ENCODE measurements at regions of chr5 and their contacts with region 1.

Region 1: DNA sequence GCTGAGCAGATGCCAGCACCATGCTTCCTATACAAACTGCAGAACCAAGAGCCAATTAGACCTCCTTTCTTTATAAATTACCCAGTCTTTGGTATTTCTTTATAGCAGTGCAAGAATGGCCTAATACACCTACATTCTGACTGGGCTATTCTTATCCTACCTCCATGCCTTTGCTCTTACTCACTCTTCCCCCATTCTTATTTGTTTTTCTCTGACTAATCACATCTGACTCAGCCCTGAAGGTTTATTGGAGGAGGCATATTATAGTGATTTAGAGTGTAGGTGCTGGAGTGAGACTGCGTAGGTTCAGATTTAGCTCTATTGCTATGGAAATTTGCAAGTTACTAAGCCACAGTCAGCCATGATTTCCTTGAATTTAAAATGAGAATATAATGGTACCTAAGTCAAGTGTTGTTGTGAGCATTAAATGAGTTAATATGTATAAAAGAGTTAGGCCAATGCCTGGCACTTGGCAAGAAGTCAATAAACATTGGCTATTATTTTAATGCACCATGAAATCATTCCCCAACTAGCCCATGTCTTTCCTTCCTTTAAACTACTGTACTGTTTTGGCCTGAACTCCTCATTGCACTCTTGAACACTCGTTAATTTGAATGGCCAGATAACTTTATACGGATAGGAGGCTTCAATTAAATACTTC is 531.2 kb upstream of the ZNF608 start:
- DNase-seq: no peak
- H3K4me3 ChIP-seq: no peak overlapping the region
- H3K27ac ChIP-seq: no peak overlapping the region
- H3K4me1 ChIP-seq: no peaks in the 10 kb centered on the region
- CTCF ChIP-seq: no peak

Region 2: GRCh38 chr5:125257057-125257972 is 20.3 kb before region 1 on chr5:
- CTCF ChIA-PET with region 1: no interaction called
- POLR2A ChIA-PET with region 1: no interaction called
- intact Hi-C with region 1: no loop called
- DNase-seq: no peak
- H3K4me3 ChIP-seq: no peak overlapping the region
- H3K27ac ChIP-seq: no peak overlapping the region
- H3K4me1 ChIP-seq: no peaks in the 10 kb centered on the region
- CTCF ChIP-seq: no peak

Region 3: GRCh38 chr5:125298260-125298659 is 20.6 kb after region 1 on chr5:
- CTCF ChIA-PET with region 1: no interaction called
- POLR2A ChIA-PET with region 1: interaction called, 11 read pairs
- intact Hi-C with region 1: no loop called
- DNase-seq: no peak
- H3K4me3 ChIP-seq: no peak overlapping the region
- H3K27ac ChIP-seq: no peak overlapping the region
- H3K4me1 ChIP-seq: peaks cover 8% of the 10 kb centered on the region
- CTCF ChIP-seq: no peak

Region 4: DNA sequence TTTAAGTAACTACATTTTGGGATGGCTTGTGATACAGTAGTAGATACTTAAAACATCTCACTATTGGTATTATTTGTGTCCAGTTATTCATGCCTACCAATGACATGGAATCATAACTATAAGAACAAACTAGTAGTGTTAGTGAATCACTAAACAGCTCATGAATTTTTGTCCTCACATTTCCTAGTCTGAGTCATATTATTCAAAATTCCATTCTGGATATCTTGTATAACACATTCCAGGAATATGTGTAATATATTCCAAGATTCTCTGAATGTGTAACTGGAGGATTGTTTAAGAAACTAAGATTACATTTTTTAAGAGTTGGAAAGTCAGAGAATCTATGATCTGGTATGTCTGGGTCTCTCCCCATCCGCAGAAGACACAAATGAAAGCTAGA is 34.1 kb after region 1 on chr5:
- CTCF ChIA-PET with region 1: no interaction called
- POLR2A ChIA-PET with region 1: interaction called, 12 read pairs
- intact Hi-C with region 1: no loop called
- DNase-seq: no peak
- H3K4me3 ChIP-seq: no peak overlapping the region
- H3K27ac ChIP-seq: no peak overlapping the region
- H3K4me1 ChIP-seq: no peaks in the 10 kb centered on the region
- CTCF ChIP-seq: no peak

Region 5: GRCh38 chr5:125564317-125564975 is 286.8 kb after region 1 on chr5:
- CTCF ChIA-PET with region 1: no interaction called
- POLR2A ChIA-PET with region 1: no interaction called
- intact Hi-C with region 1: no loop called
- DNase-seq: no peak
- H3K4me3 ChIP-seq: no peak overlapping the region
- H3K27ac ChIP-seq: no peak overlapping the region
- H3K4me1 ChIP-seq: no peaks in the 10 kb centered on the region
- CTCF ChIP-seq: no peak

Region 6: DNA sequence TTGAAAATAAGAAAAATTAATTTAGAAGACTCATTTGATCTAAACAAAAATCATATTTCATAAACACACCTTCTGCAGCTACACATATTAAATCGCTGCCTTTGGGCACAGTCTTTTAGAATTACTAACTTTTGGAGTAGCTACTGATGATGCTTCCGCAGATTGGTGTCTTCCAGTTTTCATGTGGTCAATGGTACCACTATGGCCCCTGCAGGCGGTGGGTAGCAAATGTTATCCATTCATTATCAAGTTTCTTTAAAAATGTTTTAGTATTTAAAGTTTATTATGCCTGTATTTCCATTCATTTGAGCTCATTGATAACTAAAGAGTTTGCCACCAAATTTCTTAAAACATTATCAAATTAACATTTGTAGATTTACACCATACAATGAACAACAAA is 1022.7 kb after region 1 on chr5:
- CTCF ChIA-PET with region 1: no interaction called
- POLR2A ChIA-PET with region 1: no interaction called
- intact Hi-C with region 1: no loop called
- DNase-seq: no peak
- H3K4me3 ChIP-seq: no peak overlapping the region
- H3K27ac ChIP-seq: no peak overlapping the region
- H3K4me1 ChIP-seq: no peaks in the 10 kb centered on the region
- CTCF ChIP-seq: 0 out of 2 replicates have a peak, but pooled peaks have one; percentile 11

Measured in OCI-LY7 (cell line).